ENCODE measurements at regions of chr11 and their contacts with region 1.

Region 1: DNA sequence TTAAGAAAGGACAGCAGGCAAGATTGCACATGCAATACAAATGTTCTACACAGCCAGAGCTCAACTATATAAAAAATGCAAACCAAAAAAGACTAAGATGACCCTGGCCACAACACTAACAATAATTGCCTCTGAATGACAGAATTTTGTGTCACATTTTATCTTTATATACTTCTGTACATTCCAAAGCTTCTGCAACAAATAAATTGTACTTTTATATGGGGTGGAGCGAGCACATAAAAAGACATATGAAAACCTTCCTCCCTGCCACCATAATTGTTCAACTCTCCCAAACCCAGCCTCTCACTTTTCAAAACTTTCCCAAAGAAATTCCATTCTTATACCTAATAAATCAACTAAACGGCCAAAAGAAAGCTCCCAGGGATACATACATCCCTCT is 10.7 kb downstream of the BUD13 start:
- DNase-seq: no peak
- ATAC-seq: no peak
- H3K4me3 ChIP-seq: no peak overlapping the region
- H3K27ac ChIP-seq: no peak overlapping the region
- H3K4me1 ChIP-seq: no peaks in the 10 kb centered on the region
- H3K27me3 ChIP-seq: no peaks in the 10 kb centered on the region
- CTCF ChIP-seq: no peak

Region 2: DNA sequence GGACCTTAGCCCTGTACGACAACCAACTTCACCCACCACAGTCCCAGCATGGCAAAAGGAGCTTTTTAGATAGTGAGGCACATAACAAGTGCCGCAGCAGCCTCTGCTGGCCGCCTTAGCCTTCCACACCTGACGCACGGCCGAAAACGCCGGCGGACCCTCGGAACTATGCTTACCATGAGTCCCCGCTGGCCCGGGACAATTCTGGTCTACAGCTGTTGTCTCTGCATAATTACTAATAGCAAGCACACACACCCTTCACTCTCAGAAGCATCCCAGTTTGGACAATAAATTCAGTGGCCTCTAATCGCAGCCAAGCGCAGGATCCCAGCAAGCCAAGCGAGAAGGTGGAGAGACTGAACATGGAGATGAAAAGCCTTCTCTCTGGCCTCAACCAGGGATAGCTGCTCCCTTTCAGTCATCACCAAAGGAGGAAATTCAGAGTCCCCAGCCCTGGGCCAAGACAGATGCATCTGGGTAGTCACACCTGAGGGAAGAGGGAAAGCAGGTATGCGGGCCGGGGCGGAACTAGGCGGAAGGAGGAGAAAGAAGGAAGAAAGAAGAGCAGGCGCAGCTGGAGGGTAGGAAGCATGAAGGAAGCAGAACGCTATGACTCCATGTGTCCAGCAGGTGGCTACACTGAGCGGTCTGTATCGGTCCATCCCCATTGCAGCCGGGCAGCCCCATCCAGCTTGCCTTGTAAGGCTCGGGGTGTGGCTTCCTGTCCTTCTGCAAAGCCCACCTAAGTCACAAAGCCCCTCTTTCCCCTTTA is 29.7 kb before region 1 on chr11:
- CTCF ChIA-PET with region 1: no interaction called
- POLR2A ChIA-PET with region 1: interaction called, 11 read pairs
- in situ Hi-C with region 1: no loop called
- intact Hi-C with region 1: no loop called
- DNase-seq: peak; percentile 69
- ATAC-seq: peak; percentile 91
- H3K4me3 ChIP-seq: no peak overlapping the region
- H3K27ac ChIP-seq: no peak overlapping the region
- H3K4me1 ChIP-seq: no peaks in the 10 kb centered on the region
- H3K27me3 ChIP-seq: peaks cover 7% of the 10 kb centered on the region; the same call in 1 of the 2 replicates
- CTCF ChIP-seq: peak; percentile 97

Region 3: DNA sequence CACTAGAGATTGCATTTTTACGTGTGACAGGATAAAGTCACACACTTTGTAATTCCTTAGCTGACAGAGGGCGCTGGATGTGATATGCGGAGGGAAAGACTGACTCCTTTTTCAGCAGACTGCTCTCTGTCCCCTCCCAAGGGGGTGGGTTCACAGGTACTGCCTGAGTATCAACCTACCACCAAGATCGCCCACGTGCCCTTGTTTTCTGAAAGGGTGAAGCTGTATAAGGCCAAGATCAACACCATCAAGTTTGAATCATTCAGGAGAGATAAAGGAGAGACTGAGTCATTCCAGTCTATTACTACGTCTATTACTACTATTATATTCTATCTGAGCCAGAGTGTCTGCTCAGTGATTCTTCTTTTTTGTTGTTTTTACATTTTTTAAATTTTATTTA is 20.0 kb before region 1 on chr11:
- CTCF ChIA-PET with region 1: no interaction called
- POLR2A ChIA-PET with region 1: interaction called, 11 read pairs
- in situ Hi-C with region 1: no loop called
- intact Hi-C with region 1: no loop called
- DNase-seq: no peak
- ATAC-seq: no peak
- H3K4me3 ChIP-seq: no peak overlapping the region
- H3K27ac ChIP-seq: no peak overlapping the region
- H3K4me1 ChIP-seq: peaks cover 4% of the 10 kb centered on the region; the same call in 1 of the 2 replicates
- H3K27me3 ChIP-seq: no peaks in the 10 kb centered on the region
- CTCF ChIP-seq: no peak

Region 4: DNA sequence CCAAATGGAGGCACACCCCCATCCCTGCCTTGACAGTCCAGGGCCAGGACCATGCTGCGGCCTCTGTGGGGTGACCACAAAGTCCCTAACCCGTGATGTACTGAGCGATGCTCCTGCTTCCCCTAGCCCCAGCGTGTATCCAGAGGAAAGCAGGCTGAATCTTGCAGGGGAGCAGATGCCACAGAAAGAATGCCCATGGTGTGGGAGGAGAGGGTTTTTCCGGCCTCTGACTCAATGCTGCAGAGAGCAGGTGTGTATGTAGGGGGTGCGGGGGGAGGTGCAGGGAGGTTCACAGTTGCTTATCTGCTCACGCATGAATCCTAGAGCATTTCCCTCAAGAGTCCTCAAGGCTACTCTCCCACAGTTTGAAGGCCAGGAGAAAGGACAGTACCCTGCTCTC is 696.1 kb after region 1 on chr11:
- CTCF ChIA-PET with region 1: no interaction called
- POLR2A ChIA-PET with region 1: no interaction called
- in situ Hi-C with region 1: no loop called
- intact Hi-C with region 1: no loop called
- DNase-seq: no peak
- ATAC-seq: peak; percentile 18
- H3K4me3 ChIP-seq: no peak overlapping the region
- H3K27ac ChIP-seq: no peak overlapping the region
- H3K4me1 ChIP-seq: no peaks in the 10 kb centered on the region
- H3K27me3 ChIP-seq: no peaks in the 10 kb centered on the region; the same call in 1 of the 2 replicates
- CTCF ChIP-seq: no peak